Transverse colon (tissue), 4 donors: ENCODE measurements at regions of chr6 and their contacts with region 1.

Region 1: GRCh38 chr6:160431226-160431625 is 83.0 kb downstream of the SLC22A3 start:
- DNase-seq: peak; percentile 31
- H3K4me3 ChIP-seq: no peak overlapping the region
- H3K27ac ChIP-seq: peak overlapping the region; percentile 64 to 80 (median 72)
- H3K4me1 ChIP-seq: peaks cover 0 to 17% (median 5%) of the 10 kb centered on the region in 4 donors
- H3K27me3 ChIP-seq: no peaks in the 10 kb centered on the region
- CTCF ChIP-seq: no peak
- EP300 ChIP-seq: peak; percentile 61
- POLR2A ChIP-seq: no peak

Region 2: GRCh38 chr6:160348142-160349019 is 82.8 kb before region 1 on chr6 and contains the start of gene SLC22A3:
- in situ Hi-C with region 1: no loop called
- intact Hi-C with region 1: loop called (anchors 5 kb)
- DNase-seq: peak; percentile 54
- H3K4me3 ChIP-seq: peak within 1 kb of the TSS; percentile 50 to 66 (median 57)
- H3K27ac ChIP-seq: peak within 1 kb of the TSS; percentile 70 to 85 (median 79)
- H3K4me1 ChIP-seq: peaks cover 0 to 14% (median 6%) of the 10 kb centered on the region in 4 donors
- H3K27me3 ChIP-seq: peaks cover 7% of the 10 kb centered on the region
- CTCF ChIP-seq: peak; percentile 13 to 58 (median 32)
- EP300 ChIP-seq: no peak
- POLR2A ChIP-seq: no peak
- total RNA-seq, gene SLC22A3: 4.5 to 12.0 (median 6.9) TPM

Region 3: DNA sequence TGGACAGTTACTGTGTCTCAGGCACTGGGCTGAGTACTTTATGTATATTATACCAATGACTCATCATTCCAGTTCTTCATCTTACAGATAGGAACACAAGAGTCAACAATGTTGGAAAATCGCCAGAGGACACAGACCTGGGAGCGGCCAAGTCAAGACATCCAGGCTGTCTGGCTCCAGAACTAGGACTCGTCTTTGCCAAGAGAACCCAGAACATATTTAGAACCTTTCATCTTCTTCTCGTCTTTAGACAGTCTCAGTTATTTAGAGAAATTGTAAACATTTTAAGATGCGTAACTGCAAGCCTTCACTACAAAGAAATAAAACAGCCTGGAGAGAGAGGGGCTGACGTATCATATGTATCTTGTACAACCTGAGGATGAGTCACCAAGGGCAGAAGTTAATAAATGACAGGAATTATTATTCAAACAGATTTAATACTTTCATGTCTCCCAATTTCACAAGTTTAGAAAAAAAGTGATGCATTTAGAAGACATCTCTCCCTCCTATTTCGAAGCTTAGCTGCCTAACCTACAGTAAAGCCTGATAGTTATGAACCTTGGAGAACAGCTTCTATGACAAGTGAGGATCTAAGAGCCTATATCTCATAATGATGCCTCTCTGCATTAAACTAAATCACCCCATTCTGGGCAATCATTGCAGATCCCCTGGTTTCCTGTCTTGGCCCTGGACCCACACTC is 39.7 kb before region 1 on chr6:
- in situ Hi-C with region 1: no loop called
- intact Hi-C with region 1: loop called (anchors 5 kb)
- DNase-seq: peak; percentile 33
- H3K4me3 ChIP-seq: no peak overlapping the region
- H3K27ac ChIP-seq: peak overlapping the region; percentile 42 to 70 (median 52)
- H3K4me1 ChIP-seq: peaks cover 0 to 16% (median 5%) of the 10 kb centered on the region in 4 donors
- H3K27me3 ChIP-seq: no peaks in the 10 kb centered on the region
- CTCF ChIP-seq: no peak
- EP300 ChIP-seq: no peak
- POLR2A ChIP-seq: no peak

Region 4: GRCh38 chr6:160455541-160456213 is 24.5 kb after region 1 on chr6:
- in situ Hi-C with region 1: no loop called
- intact Hi-C with region 1: no loop called
- DNase-seq: peak; percentile 64
- H3K4me3 ChIP-seq: peak overlapping the region in 1 of 4 donors; percentile 31
- H3K27ac ChIP-seq: peak overlapping the region; percentile 54 to 73 (median 66)
- H3K4me1 ChIP-seq: peaks cover 3 to 21% (median 10%) of the 10 kb centered on the region in 4 donors
- H3K27me3 ChIP-seq: no peaks in the 10 kb centered on the region
- CTCF ChIP-seq: peak; percentile 96 to 99 (median 98)
- EP300 ChIP-seq: no peak
- POLR2A ChIP-seq: no peak